ENCODE measurements at regions of chr6 and their contacts with region 1.

Region 1: DNA sequence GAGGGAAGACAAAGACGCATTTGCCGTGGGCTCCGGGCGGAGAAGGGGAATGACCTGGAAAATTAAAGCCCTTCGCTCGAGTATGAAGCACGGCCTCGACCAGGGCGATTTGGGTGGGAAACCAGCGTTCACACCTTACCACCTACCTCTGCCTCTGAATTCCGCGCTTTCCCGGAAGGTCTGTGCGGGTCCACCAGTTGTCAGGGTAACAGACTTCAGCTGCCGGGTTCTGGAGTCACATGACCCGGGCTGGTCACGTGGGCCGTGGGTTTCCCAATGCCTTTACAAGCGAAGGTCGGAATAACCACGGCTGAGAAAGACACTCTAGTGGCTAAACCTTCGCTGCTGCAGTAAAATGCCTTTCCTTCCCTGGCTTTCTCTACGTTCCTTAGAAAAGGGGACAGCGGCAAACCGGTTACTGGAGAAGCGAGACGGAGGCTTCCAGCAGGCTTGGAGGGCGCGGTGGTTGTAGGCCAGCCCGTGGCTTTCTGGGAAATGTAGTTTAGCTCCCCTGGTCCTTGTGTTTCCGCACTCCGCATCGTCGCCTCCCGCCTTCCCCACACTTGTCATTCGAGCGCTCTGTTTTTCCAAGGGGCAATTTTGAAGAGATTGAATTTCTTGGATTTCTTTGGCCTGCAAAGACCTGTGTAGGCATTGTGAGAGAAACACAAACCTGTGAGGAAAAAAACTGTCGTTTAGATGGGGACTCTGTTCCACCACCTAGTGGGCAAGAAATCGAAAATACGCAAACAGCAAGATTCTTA is at the start of gene CEP162:
- DNase-seq: peak; percentile 83
- H3K4me3 Mint-ChIP-seq: peak within 1 kb of the TSS; percentile 98
- H3K27ac Mint-ChIP-seq: peak within 1 kb of the TSS; percentile 86
- H3K4me1 Mint-ChIP-seq: peaks cover 10% of the 10 kb centered on the region
- H3K27me3 Mint-ChIP-seq: peaks cover 5% of the 10 kb centered on the region
- total RNA-seq, gene CEP162: 4.7 and 6.1 TPM in 2 replicates

Region 2: DNA sequence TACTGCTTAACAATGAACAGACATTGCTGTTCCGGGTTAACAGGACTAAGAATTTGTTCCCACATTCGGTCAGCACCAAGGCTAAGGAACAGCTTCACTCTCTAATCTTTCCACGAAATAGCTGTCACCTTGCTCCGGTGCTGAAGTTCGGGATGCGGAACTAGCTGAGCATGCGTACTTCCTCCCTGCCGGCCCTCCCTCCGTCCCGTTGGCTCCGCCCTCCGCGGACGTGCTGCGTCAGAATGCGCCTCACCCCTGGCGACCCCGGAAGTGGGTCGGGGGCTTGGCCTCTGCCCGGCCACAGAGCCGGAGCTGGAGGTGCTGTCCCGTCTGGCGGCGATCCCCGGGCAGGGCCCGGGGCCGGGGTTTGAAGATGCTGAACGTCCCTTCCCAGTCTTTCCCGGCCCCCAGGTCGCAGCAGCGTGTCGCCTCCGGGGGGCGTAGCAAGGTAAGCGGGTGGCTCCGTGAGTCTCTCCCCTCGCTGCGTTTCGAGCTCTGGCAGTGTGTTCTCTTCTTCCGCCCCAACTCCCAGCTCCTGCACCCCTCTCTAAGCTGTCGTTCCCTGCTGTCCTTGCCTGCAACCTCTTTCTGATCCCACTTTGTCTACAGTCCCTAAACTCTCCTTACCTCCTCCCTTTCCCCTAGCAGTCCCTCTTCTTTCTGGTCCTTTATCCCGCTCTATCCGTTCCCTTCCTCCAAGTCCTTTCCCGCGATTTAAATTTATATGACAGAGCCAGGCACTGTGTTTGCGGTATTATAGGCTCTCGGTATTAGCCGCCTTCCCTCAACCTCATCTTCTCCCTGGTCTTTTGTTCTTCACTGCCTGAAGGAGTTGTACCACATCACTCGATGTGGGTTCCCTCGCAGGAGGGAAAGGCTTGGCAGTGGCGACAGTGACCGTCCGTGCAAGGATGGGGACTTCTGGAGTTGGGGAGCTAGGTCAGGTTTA is 367.9 kb before region 1 on chr6 and contains the start of gene CYB5R4:
- intact Hi-C with region 1: loop called (anchors 1 kb)
- DNase-seq: peak; percentile 91
- H3K4me3 Mint-ChIP-seq: peak within 1 kb of the TSS; percentile 99
- H3K27ac Mint-ChIP-seq: peak within 1 kb of the TSS; percentile 90
- H3K4me1 Mint-ChIP-seq: peaks cover 33% of the 10 kb centered on the region
- H3K27me3 Mint-ChIP-seq: peaks cover 11% of the 10 kb centered on the region
- total RNA-seq, gene CYB5R4: 24.5 and 25.3 TPM in 2 replicates

Region 3: GRCh38 chr6:84074988-84075781 is 152.4 kb before region 1 on chr6:
- intact Hi-C with region 1: no loop called
- DNase-seq: no peak
- H3K4me3 Mint-ChIP-seq: no peak overlapping the region
- H3K27ac Mint-ChIP-seq: no peak overlapping the region
- H3K4me1 Mint-ChIP-seq: no peaks in the 10 kb centered on the region
- H3K27me3 Mint-ChIP-seq: no peaks in the 10 kb centered on the region

Region 4: DNA sequence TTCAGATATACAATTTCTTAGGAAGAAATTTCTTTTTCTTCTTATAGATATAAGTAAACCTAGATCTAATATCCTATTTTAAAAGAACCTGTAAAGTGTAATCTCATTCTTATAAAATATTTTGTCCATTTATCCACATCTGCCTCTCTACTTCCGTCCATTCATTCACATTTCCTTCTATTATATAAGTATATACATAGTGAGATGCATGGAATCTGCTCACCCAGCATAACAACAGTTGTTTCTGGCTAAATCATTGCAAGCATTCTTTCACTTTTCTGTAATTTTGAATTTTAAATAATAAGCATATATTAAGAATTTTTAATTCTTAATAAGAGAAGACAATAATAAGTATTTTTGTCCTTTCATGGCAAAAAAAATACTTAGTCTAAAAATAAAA is 45.6 kb before region 1 on chr6:
- intact Hi-C with region 1: no loop called
- DNase-seq: no peak
- H3K4me3 Mint-ChIP-seq: no peak overlapping the region
- H3K27ac Mint-ChIP-seq: no peak overlapping the region
- H3K4me1 Mint-ChIP-seq: no peaks in the 10 kb centered on the region
- H3K27me3 Mint-ChIP-seq: no peaks in the 10 kb centered on the region

Region 5: DNA sequence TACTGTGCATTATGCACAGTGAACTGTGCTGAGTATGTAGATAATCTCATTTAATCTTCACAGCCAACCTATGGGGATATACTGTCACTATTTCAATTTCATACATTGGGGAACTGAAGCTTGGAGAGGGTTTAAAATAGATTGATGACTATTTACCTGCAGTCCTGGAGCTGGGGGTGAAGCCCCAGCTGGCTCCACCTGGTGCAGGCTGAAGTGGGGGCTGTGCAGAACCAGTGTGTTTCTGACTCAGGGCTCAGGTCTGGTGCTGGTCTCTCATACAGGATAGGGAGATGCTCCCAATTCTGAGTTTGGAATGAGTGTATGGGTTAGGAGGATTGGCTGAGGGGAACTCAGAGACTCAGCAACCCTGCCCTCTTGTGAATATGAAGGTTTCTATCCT is 175.9 kb after region 1 on chr6:
- intact Hi-C with region 1: no loop called
- DNase-seq: no peak
- H3K4me3 Mint-ChIP-seq: no peak overlapping the region
- H3K27ac Mint-ChIP-seq: no peak overlapping the region
- H3K4me1 Mint-ChIP-seq: no peaks in the 10 kb centered on the region
- H3K27me3 Mint-ChIP-seq: no peaks in the 10 kb centered on the region

Region 6: DNA sequence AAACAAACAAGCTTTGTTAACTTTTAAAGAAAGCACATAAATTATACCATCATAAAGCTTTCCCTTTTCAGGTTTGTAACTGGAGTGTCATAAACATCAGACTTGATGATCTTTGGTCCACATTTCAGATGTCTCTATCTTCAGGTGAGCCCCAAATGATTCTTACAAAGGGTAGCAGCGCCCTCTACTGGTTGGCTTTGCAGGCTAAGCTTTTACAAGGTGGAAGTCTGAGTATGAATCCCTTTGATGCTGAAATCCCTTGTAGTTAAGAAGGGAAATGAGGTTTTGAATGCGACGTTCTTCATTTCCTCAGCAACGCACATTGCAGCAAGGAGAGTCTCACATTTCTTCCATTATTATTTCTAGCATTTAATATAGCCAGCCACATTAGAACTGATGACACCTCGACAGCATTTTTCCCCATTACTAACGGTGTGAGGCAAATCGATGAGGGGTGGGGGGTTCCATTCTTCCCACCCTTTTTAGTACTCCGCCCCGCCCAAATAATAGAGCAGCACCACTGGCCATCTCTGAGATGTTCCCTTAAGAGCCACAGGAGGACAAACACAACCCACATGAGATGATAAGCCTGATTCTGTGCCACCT is 1095.9 kb after region 1 on chr6:
- intact Hi-C with region 1: loop called (anchors 10 kb)
- DNase-seq: peak; percentile 51
- H3K4me3 Mint-ChIP-seq: no peak overlapping the region
- H3K27ac Mint-ChIP-seq: no peak overlapping the region
- H3K4me1 Mint-ChIP-seq: no peaks in the 10 kb centered on the region
- H3K27me3 Mint-ChIP-seq: peaks cover 3% of the 10 kb centered on the region

Region 7: DNA sequence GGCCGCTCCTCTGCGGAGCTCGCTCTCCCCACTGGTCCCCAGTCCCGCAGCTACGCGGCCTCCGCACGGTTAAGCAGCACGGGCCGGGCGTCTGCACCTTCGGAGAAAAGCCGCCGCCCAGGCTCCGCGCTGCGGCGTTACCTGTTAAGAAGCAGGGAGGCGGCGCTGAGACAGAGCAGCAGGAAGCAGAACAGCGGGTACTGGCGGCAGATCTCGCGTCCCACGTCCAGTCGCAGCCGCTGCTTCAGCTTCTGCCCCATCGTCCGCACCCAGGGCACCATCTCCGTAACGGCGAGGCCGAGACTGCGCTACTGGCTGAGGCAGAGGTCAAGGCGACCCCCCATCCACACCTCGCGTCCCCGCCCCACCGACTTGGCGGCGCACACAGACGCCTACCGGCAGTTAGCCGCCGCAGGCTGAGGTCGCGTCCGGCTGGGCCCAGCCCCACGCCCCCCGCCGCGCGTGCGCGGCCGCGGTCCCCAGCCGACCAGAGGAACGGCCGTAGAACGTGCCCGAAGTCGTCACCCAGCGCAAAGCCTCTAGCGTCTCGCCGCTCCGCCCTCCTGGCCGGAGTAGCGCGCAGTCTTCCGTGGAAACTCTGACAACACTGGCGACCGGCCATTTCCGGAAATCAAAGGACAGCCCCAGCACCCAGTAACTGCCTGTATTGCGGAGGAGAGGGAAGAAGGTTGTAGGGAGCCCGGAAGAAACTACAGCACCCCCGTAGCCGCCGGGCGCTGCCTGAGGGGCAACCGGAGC is 1366.0 kb after region 1 on chr6 and contains the start of gene SNX14:
- intact Hi-C with region 1: loop called (anchors 5 kb)
- DNase-seq: peak; percentile 74
- H3K4me3 Mint-ChIP-seq: peak within 1 kb of the TSS; percentile 94
- H3K27ac Mint-ChIP-seq: peak within 1 kb of the TSS; percentile 93
- H3K4me1 Mint-ChIP-seq: peaks cover 14% of the 10 kb centered on the region
- H3K27me3 Mint-ChIP-seq: no peaks in the 10 kb centered on the region
- total RNA-seq, gene SNX14: 49.5 and 51.0 TPM in 2 replicates

Measured in activated T-helper 1 cell treated with anti-CD3 and anti-CD28 coated beads, Interleukin-12 subunit alpha, Interleukin-12 subunit beta, Interleukin-2, Interleukin-4 antibody, amounts not matched to agents 30 ng/mL and 10 ng/mL and 1 ng/mL, durations not matched to agents 14 hours and 24 hours and 36 hours (primary cell).